Left cardiac atrium (tissue), 4 donors: ENCODE measurements at regions of chrX and their contacts with region 1.

Region 1: GRCh38 chrX:154534862-154535670 is 11.6 kb downstream of the G6PD start:
- DNase-seq: peak; percentile 93
- ATAC-seq: peak; percentile 90 to 91

Region 2: DNA sequence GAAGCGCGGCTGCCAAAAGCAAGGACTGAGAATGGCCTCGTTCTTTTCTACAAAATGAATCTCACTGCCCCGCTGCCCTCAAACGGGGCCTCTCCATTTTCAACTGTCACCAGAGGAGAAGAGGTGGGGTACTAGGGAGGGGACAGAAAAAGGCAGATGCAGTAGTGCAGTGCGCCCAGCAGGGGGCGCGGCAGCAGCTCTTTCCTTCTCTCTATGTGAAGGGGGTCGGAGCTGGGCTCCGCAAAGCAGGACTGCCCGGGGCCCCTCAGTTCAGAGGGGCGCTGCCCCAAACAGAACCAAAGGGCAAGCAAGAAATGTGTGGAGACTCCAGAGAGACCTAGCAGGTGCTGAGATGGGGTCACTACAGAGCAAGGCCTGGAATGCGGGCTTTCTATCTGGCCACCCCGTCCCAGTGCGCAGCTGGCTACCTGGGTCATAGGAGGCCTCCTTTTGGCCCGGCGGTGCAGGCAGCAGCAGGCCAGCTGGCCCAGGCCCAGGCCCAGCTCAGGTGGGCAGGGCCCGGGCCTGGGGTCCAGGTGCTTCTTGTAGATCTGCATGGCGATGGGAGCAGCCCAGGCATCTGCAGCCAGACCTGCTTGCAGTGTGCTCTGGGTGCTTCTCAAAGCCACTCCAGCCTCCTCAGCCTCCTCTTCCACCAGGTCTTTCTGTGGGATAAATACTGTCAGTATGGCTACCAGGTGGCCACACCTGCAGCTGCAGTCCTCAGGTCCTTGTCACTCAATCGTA is 521.3 kb before region 1 on chrX:
- intact Hi-C with region 1: no loop called
- DNase-seq: no peak
- ATAC-seq: peak; percentile 72 to 74

Region 3: GRCh38 chrX:154317391-154317995 is 217.6 kb before region 1 on chrX:
- intact Hi-C with region 1: loop called in 1 of 2 experiments (anchors 5 kb)
- DNase-seq: peak; percentile 20
- ATAC-seq: peak in 1 of 2 donors; percentile 57

Region 4: GRCh38 chrX:154373340-154374306 is 161.4 kb before region 1 on chrX:
- intact Hi-C with region 1: loop called in 1 of 2 experiments (anchors 2 kb)
- DNase-seq: peak; percentile 72
- ATAC-seq: peak in 1 of 2 donors; percentile 3

Region 5: GRCh38 chrX:154515878-154516655 is 19.0 kb before region 1 on chrX and contains the start of gene FAM3A:
- intact Hi-C with region 1: no loop called
- DNase-seq: peak; percentile 93
- ATAC-seq: peak; percentile 97 to 98
- total RNA-seq, gene FAM3A: 44.4 to 51.0 TPM